Activated CD8-positive, alpha-beta T cell treated with anti-CD3 and anti-CD28 coated beads, Interleukin-2, amount 10 ng/mL, durations not matched to agents 7 days and 5 days (primary cell): ENCODE measurements at regions of chr5 and their contacts with region 1.

Region 1: DNA sequence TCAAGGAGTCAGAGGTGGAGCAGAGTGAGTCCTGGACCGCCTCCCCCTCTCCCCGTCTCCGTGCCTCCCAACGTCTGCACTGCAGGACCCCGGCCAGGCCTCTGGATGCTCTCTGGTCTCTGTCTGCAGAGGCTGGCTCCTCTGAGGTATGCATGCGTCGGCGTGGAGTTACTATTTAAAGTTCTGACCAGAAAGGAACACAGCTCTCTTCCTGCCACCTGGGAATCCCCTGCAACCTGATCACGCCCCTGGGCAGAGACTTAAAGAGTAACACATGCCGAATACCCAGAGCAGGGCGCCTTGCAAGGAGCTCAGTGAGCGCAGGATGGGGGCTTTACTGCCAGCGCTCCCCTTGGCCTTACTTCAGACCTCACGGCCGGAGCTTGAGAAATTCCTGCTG is 16.0 kb downstream of the ANXA6 start:
- DNase-seq: peak; percentile 70
- ATAC-seq: peak; percentile 79
- H3K4me3 Mint-ChIP-seq: peak overlapping the region; percentile 58
- H3K27ac Mint-ChIP-seq: peak overlapping the region; percentile 76
- H3K4me1 Mint-ChIP-seq: peaks cover 93% of the 10 kb centered on the region
- H3K27me3 Mint-ChIP-seq: no peaks in the 10 kb centered on the region

Region 2: DNA sequence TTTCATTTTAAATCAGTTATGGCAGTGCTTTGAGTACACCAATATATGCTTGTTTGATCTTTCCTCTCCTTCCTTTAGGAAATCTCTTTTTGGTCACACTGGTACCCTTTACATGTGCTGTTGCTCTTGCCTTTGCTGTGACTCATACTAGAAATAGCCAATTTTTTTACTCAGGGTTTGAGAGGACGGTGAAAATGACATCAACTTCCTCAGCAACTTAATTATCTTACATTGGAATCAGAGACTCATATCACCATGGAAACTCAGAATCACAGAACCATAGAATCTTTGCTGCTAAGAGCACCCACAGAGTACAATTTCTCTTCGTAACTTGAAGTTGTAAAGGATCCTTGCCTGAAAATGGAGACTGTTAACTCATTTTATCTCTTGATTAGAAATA is 222.9 kb before region 1 on chr5:
- CTCF ChIA-PET with region 1: no interaction called
- POLR2A ChIA-PET with region 1: no interaction called
- DNase-seq: no peak
- ATAC-seq: no peak
- H3K4me3 Mint-ChIP-seq: no peak overlapping the region
- H3K27ac Mint-ChIP-seq: no peak overlapping the region
- H3K4me1 Mint-ChIP-seq: no peaks in the 10 kb centered on the region
- H3K27me3 Mint-ChIP-seq: no peaks in the 10 kb centered on the region

Region 3: DNA sequence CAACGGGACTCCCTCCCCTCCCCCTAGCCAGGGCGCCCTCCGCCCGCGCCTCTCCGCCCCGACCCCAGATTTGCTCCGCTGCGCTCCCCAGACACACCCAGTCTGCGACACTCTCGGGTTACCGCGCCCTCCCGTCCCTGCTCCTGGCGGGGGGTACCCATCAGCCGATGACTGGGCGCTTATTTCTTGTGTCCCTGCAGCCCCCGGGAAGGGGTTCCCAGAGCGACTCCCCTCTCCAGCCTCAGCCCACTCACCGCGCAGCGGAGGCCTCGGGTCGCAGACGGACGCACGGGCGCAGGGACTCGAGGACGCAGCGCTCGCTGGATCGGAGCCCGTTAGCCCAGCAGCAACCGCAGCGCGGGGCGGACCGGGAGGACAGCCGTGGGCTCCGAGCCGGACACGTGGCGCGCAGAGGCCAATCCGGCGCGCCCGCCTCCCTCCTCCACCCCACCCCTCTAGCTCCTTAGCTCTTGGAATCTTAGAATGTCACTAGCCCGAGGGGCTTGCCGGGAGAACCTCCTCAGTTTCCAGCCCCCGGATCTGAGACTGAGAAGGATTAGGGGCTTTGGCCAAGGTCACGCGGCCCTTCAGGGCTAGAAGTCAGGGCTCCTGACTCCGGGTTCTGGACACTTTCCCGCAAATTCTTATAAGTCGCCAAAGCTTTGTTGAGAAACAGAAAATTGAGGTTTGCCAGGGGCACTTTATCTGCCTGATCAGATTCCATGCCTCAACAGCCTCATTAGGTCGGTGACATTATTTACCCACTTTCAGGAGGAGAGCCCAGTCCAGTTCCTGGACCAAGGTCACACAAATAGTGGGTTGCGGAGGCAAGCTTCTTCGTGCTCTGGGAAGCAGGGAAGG is 16.1 kb after region 1 on chr5 and contains the start of gene ANXA6:
- CTCF ChIA-PET with region 1: interaction called, 74 read pairs
- POLR2A ChIA-PET with region 1: interaction called, 24 read pairs
- DNase-seq: peak; percentile 76
- ATAC-seq: peak; percentile 81
- H3K4me3 Mint-ChIP-seq: peak within 1 kb of the TSS; percentile 95
- H3K27ac Mint-ChIP-seq: peak within 1 kb of the TSS; percentile 89
- H3K4me1 Mint-ChIP-seq: peaks cover 47% of the 10 kb centered on the region
- H3K27me3 Mint-ChIP-seq: peaks cover 4% of the 10 kb centered on the region
- total RNA-seq, gene ANXA6: 481 to 495 TPM

Region 4: DNA sequence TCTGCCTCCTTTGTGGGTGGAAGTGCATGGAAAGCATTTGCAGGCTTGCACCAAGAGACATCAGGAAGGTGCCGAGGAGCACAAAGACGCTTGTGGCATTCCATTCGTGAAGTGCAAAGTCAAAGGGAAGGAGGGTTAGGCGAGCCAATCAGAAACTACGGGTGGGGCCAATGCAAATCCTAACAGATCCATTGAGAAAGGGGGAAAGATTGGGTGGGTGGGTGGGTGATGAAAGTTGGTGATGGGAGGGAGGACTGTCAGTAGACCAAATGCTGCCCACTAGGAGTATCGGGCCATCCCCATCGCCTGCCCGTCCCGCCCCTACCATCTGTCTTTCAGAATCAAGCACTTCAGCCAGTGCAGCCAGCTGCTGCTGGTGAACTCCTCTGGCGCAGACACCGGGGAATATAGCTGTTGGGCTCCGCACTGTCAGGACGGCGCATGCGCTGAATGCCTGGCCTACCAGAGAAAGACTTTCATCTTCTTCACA is 33.1 kb after region 1 on chr5:
- CTCF ChIA-PET with region 1: no interaction called
- POLR2A ChIA-PET with region 1: no interaction called
- DNase-seq: no peak
- ATAC-seq: no peak
- H3K4me3 Mint-ChIP-seq: no peak overlapping the region
- H3K27ac Mint-ChIP-seq: no peak overlapping the region
- H3K4me1 Mint-ChIP-seq: peaks cover 11% of the 10 kb centered on the region
- H3K27me3 Mint-ChIP-seq: no peaks in the 10 kb centered on the region